Right ventricle myocardium superior (tissue), 1 donor: ENCODE measurements at regions of chr16 and their contacts with region 1.

Region 1: DNA sequence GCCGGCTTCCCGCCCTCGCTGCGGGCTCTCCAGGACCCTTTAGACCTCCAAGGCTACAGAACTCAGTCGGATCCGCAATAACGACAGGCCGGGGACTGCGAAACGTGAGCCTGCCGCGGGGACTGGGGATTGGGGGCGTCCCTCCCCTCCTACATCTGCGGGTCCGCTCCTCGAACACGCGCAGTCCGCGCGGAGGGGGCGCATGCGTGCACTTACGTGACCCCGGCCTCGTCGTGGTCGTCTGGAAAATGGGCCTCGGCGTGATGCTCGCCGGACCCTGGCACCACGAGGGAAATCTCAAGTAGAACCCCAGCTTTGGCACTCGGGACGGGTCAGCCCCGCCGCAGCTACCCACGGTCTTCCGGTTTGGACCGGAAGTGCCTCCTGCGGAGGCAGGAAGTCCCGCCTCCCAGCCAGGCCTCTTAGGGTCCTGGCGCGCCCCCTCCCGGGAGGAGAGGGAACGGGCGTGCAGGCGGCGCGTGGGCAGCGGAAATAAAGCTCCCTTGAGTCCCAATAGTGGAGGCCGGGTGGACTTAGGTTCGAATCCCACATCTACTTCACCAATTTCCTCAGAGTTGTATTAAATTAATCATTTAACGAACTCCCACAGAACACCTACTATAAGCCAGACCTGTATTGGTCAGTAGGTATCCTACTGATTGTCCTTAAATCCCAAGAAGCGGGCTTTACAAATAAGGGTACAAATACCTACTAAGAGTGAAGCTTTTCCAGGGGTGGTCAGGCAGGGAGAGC is at the start of gene TAF1C:
- DNase-seq: peak; percentile 97
- ATAC-seq: peak; percentile 98
- total RNA-seq, gene TAF1C: 29.3 TPM

Region 2: DNA sequence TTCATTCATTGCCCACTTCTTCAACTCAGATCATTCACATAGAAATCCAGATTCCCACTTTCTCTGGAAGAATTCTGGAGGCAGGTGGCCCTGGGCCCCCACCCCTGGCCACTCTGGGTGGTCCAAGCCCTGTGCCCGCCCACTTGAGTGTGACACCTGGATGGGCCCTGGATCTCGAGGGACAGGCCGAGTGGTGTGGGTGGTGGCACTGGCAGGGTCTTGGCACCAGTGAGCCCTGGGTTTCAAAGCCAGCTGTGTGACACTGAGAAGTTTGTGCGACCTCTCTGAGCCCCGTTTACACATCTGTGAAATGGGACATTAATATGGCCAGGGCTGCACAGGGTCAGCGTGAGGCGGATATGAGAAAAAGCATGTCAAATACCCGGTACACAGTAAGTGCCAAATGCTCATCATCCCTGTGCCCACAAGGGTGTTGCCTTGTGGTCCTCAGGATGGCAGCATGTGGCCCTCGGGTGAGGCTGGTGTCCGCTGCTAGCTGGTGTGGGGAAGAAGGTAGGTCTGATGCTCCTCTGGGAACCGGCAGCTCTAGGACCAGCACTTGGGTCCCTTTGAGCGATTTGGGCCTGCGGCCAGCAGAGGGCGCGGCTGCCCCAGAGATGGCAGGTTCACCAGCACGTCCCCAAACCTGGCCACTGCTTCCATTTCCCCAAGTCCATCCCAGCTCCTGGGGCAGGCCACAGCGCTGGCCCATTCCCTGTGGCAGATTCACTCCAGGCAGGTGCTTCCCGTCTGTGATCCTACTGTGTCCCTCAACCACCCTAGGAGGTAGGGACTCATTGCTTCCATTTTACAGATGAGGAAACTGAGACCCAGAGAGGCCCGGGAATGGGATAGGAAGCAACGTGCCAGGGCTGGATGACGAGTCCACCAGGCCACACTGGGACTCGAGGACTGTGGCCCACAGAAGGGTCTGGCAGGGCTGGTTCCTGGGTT is 230.2 kb before region 1 on chr16:
- intact Hi-C with region 1: loop called (anchors 5 kb)
- DNase-seq: peak; percentile 90
- ATAC-seq: peak; percentile 22

Region 3: DNA sequence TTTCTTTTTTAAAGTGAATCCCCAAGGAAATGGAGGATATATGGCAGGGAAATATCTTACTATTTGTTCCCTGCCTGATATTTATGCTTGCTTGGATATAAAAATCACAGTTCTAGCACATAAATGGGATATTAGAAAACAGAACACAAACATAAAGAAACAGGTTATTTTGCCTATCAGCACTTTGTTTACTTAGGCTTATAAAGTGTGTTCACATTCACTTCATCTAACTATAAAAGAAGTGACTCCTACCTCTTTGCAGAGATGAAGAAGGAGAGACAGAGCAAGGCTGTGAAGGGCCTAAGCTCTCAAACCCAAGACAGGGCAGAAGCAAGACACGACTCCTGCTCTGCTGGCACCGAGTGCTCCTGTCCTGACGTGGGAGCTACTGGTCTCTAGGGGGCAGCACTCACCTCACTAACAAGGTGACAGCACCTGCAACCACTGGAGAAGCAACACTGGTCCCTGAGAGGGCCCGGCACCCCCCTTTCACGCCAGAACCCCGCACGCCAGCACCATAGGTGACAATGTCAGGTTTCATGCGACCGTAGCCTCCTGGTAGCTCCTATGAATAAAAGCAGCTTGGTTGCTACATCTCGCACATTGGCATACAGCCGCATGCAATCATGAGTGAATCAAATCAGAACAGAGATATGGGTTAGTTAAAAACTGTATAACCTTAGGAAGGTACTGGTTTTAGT is 102.1 kb before region 1 on chr16:
- intact Hi-C with region 1: loop called (anchors 5 kb)
- DNase-seq: peak; percentile 58
- ATAC-seq: peak; percentile 45

Region 4: DNA sequence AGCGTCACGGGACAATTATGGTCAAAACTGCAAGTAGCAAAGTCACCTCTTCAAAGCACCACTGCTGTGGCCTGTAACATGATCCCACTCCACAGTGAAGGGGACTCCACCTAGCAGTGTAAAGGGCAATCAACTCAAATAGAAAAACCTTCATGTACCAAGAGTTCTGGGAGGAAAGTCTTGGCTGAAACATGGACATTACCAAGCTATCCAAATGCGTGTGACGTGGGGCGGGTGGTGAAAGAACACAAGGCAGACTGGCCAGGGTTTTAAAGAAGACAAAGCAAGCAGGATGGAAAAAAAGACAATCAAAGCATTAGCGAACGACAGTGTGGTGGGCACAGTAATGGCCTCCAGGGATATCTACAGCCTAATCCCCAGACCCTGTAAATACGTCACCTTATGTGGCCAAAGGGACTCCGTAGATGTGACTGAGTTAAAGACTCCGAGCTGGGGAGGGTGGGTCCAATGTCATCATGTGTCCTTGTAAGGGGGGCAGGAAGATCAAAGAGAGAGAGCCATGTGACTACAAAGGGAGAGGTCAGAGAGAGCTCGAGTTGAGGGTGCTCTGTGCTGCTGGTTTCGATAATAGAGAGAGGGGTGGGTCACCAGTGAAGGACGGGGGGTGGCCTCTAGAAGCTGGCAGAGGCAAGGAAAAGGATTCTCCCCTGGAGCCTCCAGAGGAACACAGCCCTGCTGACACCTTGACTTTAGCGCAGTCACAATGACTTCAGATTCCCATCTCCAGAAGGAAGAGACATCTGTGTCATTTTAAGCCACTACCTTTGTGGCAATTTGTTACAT is 47.8 kb before region 1 on chr16:
- intact Hi-C with region 1: loop called (anchors 5 kb)
- DNase-seq: no peak
- ATAC-seq: peak; percentile 86

Region 5: GRCh38 chr16:84239141-84239769 is 52.4 kb after region 1 on chr16:
- intact Hi-C with region 1: no loop called
- DNase-seq: no peak
- ATAC-seq: no peak